ENCODE measurements at regions of chr17 and their contacts with region 1.

Region 1: DNA sequence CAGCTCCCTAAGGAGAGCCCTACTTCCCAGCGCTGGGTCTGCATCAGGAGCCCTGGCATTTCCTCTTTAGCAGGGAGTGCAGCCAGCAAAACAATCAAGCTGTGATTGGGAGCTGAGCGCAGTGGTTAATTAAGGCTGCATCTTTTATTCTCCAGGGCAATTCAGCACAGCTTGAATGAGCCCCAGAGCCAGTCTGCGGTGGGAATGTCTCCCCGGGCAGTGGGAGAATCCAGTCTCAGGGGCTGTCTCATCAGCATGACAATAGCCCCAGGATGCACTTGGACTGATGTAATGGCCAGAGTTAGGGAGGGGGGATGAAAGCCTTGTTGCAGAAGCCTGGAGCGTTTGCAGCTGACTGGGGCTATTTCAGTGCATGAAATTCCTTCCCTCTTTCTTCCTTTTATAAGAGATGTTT is 292.6 kb upstream of the SOX9 start:
- DNase-seq: no peak
- ATAC-seq: no peak
- H3K4me3 ChIP-seq: no peak overlapping the region
- H3K4me3 Mint-ChIP-seq: no peak overlapping the region
- H3K27ac ChIP-seq: no peak overlapping the region
- H3K27ac Mint-ChIP-seq: no peak overlapping the region
- H3K4me1 ChIP-seq: no peaks in the 10 kb centered on the region
- H3K4me1 Mint-ChIP-seq: no peaks in the 10 kb centered on the region
- H3K27me3 ChIP-seq: no peaks in the 10 kb centered on the region
- H3K27me3 Mint-ChIP-seq: peaks cover 0 to 6% (median 0%) of the 10 kb centered on the region in 5 donors

Region 2: DNA sequence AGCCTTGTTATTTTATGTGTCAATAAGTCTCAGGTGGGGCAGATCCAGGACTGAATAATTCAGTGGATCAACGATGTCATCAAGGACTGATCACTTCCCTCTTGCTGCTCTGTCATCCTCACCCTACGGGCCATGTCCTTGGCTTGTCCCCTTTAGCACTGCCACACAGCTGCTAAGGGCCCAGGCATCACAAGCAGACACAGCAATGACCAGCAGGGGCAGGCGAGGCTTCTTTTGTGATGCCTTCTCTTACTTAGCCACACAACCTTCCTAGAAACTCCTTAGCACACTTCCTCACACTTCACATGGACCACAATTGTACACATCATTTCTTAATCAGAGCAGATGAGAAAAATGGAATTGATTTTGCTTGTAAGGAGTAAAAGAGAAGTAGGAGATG is 63.7 kb before region 1 on chr17:
- CTCF ChIA-PET with region 1: no interaction called
- POLR2A ChIA-PET with region 1: no interaction called
- intact Hi-C with region 1: loop called in 1 of 2 experiments (anchors 10 kb)
- DNase-seq: no peak
- ATAC-seq: no peak
- H3K4me3 ChIP-seq: no peak overlapping the region
- H3K4me3 Mint-ChIP-seq: no peak overlapping the region
- H3K27ac ChIP-seq: no peak overlapping the region
- H3K27ac Mint-ChIP-seq: no peak overlapping the region
- H3K4me1 ChIP-seq: no peaks in the 10 kb centered on the region
- H3K4me1 Mint-ChIP-seq: no peaks in the 10 kb centered on the region
- H3K27me3 ChIP-seq: no peaks in the 10 kb centered on the region
- H3K27me3 Mint-ChIP-seq: peaks cover 0 to 3% (median 0%) of the 10 kb centered on the region in 5 donors